ENCODE measurements at regions of chr11 and their contacts with region 1.

Region 1: GRCh38 chr11:14643697-14644225 is at the start of gene PDE3B:
- DNase-seq: peak; percentile 42 to 79 (median 66)
- ATAC-seq: peak; percentile 65 to 74 (median 72)
- H3K4me3 ChIP-seq: peak within 1 kb of the TSS; percentile 97 to 100
- H3K4me3 Mint-ChIP-seq: peak within 1 kb of the TSS; percentile 85 to 87 (median 86)
- H3K27ac ChIP-seq: peak within 1 kb of the TSS; percentile 80
- H3K27ac Mint-ChIP-seq: peak within 1 kb of the TSS; percentile 86 to 87
- H3K4me1 ChIP-seq: peaks cover 11 to 44% of the 10 kb centered on the region in 2 experiments
- H3K4me1 Mint-ChIP-seq: peaks cover 49 to 58% (median 54%) of the 10 kb centered on the region in 3 donors
- H3K27me3 ChIP-seq: no peaks in the 10 kb centered on the region
- H3K27me3 Mint-ChIP-seq: no peaks in the 10 kb centered on the region
- total RNA-seq, gene PDE3B: 130 to 162 (median 143) TPM

Region 2: GRCh38 chr11:14179126-14179820 is 464.5 kb before region 1 on chr11:
- CTCF ChIA-PET with region 1: no interaction called
- POLR2A ChIA-PET with region 1: no interaction called
- DNase-seq: no peak
- ATAC-seq: no peak
- H3K4me3 ChIP-seq: no peak overlapping the region
- H3K4me3 Mint-ChIP-seq: no peak overlapping the region
- H3K27ac ChIP-seq: no peak overlapping the region
- H3K27ac Mint-ChIP-seq: no peak overlapping the region
- H3K4me1 ChIP-seq: peaks cover 0 to 2% of the 10 kb centered on the region in 2 experiments
- H3K4me1 Mint-ChIP-seq: peaks cover 0 to 21% (median 18%) of the 10 kb centered on the region in 3 donors
- H3K27me3 ChIP-seq: no peaks in the 10 kb centered on the region
- H3K27me3 Mint-ChIP-seq: no peaks in the 10 kb centered on the region

Region 3: DNA sequence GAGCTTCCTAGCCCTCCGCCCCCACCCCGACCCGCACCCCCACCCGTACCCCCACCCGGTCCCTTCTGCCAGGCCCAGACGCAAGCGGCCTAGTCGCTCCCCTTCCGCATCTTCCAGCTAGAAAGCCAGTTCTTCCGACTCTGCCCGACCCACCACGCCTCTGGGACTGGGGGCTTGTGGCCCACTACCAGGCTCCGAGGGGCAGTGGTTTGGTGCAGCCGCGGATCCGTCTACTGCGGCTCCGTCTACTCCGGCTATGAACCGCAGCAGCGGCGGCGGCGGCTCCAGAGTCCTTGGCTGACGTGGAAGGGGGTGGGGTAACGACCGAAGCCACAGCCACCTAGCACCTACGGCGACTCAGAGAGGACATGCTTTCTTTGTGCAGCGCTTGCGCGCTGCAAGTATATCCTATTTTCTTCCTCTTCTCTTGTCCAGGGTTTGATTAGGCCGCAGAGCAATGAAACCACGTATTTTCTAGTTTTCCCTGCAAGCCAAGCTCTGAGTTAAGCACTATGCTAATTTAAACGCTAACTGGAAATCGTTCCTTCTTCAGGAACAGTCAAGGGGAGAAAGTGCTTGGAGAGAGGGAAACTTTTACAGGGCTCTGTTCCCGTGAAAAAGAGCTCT is 144.1 kb before region 1 on chr11 and contains the start of gene COPB1:
- CTCF ChIA-PET with region 1: interaction called in 1 of 2 experiments, 10 read pairs
- POLR2A ChIA-PET with region 1: interaction called in 1 of 2 experiments, 8 read pairs
- DNase-seq: peak; percentile 74 to 96 (median 92)
- ATAC-seq: peak; percentile 93 to 95 (median 94)
- H3K4me3 ChIP-seq: peak within 1 kb of the TSS; percentile 77 to 91
- H3K4me3 Mint-ChIP-seq: peak within 1 kb of the TSS; percentile 87 to 98 (median 98)
- H3K27ac ChIP-seq: peak within 1 kb of the TSS; percentile 63
- H3K27ac Mint-ChIP-seq: peak within 1 kb of the TSS; percentile 98
- H3K4me1 ChIP-seq: peaks cover 3 to 11% of the 10 kb centered on the region in 2 experiments
- H3K4me1 Mint-ChIP-seq: peaks cover 48 to 58% (median 49%) of the 10 kb centered on the region in 3 donors
- H3K27me3 ChIP-seq: no peaks in the 10 kb centered on the region
- H3K27me3 Mint-ChIP-seq: no peaks in the 10 kb centered on the region
- total RNA-seq, gene COPB1: 65.1 to 80.8 (median 78.1) TPM

Region 4: GRCh38 chr11:14554959-14555358 is 88.8 kb before region 1 on chr11:
- CTCF ChIA-PET with region 1: interaction called, 4 to 13 read pairs
- POLR2A ChIA-PET with region 1: interaction called in 1 of 2 experiments, 4 read pairs
- DNase-seq: peak in 26 of 35 experiments; percentile 8 to 85 (median 48)
- ATAC-seq: peak; percentile 87 to 97 (median 94)
- H3K4me3 ChIP-seq: no peak overlapping the region
- H3K4me3 Mint-ChIP-seq: peak overlapping the region; percentile 15 to 43 (median 28)
- H3K27ac ChIP-seq: peak overlapping the region; percentile 58
- H3K27ac Mint-ChIP-seq: peak overlapping the region; percentile 93
- H3K4me1 ChIP-seq: peaks cover 4 to 25% of the 10 kb centered on the region in 2 experiments
- H3K4me1 Mint-ChIP-seq: peaks cover 40 to 52% (median 48%) of the 10 kb centered on the region in 3 donors
- H3K27me3 ChIP-seq: no peaks in the 10 kb centered on the region
- H3K27me3 Mint-ChIP-seq: no peaks in the 10 kb centered on the region

Region 5: DNA sequence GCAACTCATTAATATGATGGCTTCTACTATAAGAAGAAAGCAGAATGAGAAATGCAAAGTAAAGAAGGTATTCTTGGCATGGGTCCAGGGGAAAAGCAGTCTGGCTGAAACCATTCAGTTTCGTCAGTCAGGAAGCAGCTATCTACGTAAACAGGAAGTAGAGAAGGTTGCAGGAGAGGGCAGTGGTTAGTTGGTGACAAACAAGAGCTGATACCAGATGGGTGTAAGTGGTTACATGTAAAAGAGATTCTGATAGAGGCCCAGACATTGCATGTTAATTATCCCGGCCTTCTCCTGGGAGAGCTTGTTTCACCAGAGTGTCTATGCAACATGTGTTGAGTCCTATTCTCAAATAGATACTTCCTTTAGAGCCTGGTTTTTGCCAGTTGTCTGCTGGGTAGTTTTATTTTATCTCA is 65.2 kb before region 1 on chr11:
- CTCF ChIA-PET with region 1: interaction called in 1 of 2 experiments, 28 read pairs
- POLR2A ChIA-PET with region 1: interaction called, 3 to 15 read pairs
- DNase-seq: peak; percentile 26 to 96 (median 70)
- ATAC-seq: peak; percentile 98 to 99 (median 98)
- H3K4me3 ChIP-seq: no peak overlapping the region
- H3K4me3 Mint-ChIP-seq: peak overlapping the region; percentile 45 to 63 (median 50)
- H3K27ac ChIP-seq: peak overlapping the region; percentile 91
- H3K27ac Mint-ChIP-seq: peak overlapping the region; percentile 88 to 93
- H3K4me1 ChIP-seq: peaks cover 22 to 35% of the 10 kb centered on the region in 2 experiments
- H3K4me1 Mint-ChIP-seq: peaks cover 60 to 71% (median 68%) of the 10 kb centered on the region in 3 donors
- H3K27me3 ChIP-seq: no peaks in the 10 kb centered on the region
- H3K27me3 Mint-ChIP-seq: no peaks in the 10 kb centered on the region

Region 6: GRCh38 chr11:14861680-14862079 is 217.9 kb after region 1 on chr11:
- CTCF ChIA-PET with region 1: no interaction called
- POLR2A ChIA-PET with region 1: no interaction called
- DNase-seq: no peak
- ATAC-seq: no peak
- H3K4me3 ChIP-seq: no peak overlapping the region
- H3K4me3 Mint-ChIP-seq: no peak overlapping the region
- H3K27ac ChIP-seq: no peak overlapping the region
- H3K27ac Mint-ChIP-seq: peak overlapping the region in 1 of 2 donors; percentile 58
- H3K4me1 ChIP-seq: no peaks in the 10 kb centered on the region
- H3K4me1 Mint-ChIP-seq: peaks cover 6 to 12% (median 9%) of the 10 kb centered on the region in 3 donors
- H3K27me3 ChIP-seq: no peaks in the 10 kb centered on the region
- H3K27me3 Mint-ChIP-seq: no peaks in the 10 kb centered on the region

Measured in T-cell (primary cell).